ENCODE measurements at regions of chr7 and their contacts with region 1.

Region 1: GRCh38 chr7:1225441-1226185 is 7.1 kb upstream of the UNCX start:
- DNase-seq: peak; percentile 68
- ATAC-seq: peak; percentile 13; the same call in 1 of the 2 replicates
- H3K4me3 Mint-ChIP-seq: peak overlapping the region; percentile 52
- H3K27ac Mint-ChIP-seq: no peak overlapping the region
- H3K4me1 Mint-ChIP-seq: peaks cover 33% of the 10 kb centered on the region
- H3K27me3 Mint-ChIP-seq: peaks cover 95% of the 10 kb centered on the region
- CTCF ChIP-seq: peak; percentile 82

Region 2: GRCh38 chr7:1236831-1237701 is 11.5 kb after region 1 on chr7:
- CTCF ChIA-PET with region 1: interaction called, 13 read pairs
- POLR2A ChIA-PET with region 1: interaction called, 4 read pairs
- DNase-seq: peak; percentile 23
- ATAC-seq: no peak
- H3K4me3 Mint-ChIP-seq: peak overlapping the region; percentile 43
- H3K27ac Mint-ChIP-seq: no peak overlapping the region
- H3K4me1 Mint-ChIP-seq: peaks cover 40% of the 10 kb centered on the region
- H3K27me3 Mint-ChIP-seq: peaks cover 87% of the 10 kb centered on the region
- CTCF ChIP-seq: no peak

Region 3: DNA sequence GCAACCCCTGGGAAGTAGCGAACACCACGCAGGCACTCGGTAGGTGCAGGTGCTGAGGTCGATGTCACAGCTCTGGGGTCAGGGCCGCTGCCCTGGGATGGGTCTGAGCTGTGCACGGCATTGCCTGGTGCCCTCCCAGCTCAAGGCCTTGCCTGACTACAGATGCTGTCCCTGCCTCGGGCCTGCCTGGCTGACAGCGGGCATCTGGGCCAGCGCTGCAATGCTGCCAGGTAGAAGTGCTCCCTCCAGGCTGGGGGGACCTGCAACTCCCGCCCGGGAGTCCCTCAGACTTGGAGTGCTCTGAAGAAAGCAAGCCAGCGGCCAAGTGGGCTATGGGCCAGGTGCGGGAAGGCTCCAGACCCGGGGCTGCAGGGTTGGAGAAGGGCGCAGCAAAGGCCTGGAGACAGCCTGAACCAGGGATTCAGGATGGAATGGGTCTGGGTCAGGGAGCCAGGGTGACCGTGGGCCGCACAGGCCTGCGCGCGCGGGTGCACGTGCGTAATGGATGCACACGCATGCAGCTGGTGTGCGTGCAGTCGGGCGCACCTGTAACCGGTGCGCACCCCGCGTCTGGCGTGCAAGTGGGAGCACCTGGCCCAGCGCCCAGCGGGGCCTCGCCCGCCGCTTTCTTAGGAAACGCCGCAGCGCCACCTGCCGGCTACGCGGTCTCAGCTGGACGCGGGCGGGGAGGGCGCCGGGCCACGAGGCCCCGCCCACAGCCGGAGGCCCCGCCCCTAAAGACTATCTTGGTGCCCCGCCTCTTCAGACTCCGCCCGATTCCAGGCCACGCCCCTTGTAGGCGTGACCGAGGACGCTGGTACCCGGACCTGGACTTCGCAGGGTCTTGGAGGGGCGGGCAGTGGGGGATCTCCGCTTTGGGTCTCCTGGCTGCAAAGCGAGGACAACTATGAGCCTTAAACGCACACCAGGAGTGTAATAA is 187.0 kb after region 1 on chr7:
- CTCF ChIA-PET with region 1: interaction called, 12 read pairs
- POLR2A ChIA-PET with region 1: no interaction called
- DNase-seq: peak; percentile 95
- ATAC-seq: peak; percentile 95
- H3K4me3 Mint-ChIP-seq: peak overlapping the region; percentile 55
- H3K27ac Mint-ChIP-seq: no peak overlapping the region
- H3K4me1 Mint-ChIP-seq: peaks cover 6% of the 10 kb centered on the region; the same call in 1 of the 2 replicates
- H3K27me3 Mint-ChIP-seq: peaks cover 21% of the 10 kb centered on the region
- CTCF ChIP-seq: peak; percentile 85; the same call in 1 of the 2 replicates

Measured in WTC11 (cell line).